IMR-90 (cell line): ENCODE measurements at regions of chr21 and their contacts with region 1.

Region 1: GRCh38 chr21:34333150-34333739 is 30.6 kb upstream of the KCNE2 start:
- DNase-seq: peak; percentile 25
- ATAC-seq: no peak
- H3K4me3 ChIP-seq: no peak overlapping the region
- H3K27ac ChIP-seq: no peak overlapping the region
- H3K4me1 ChIP-seq: peaks cover 34% of the 10 kb centered on the region
- H3K27me3 ChIP-seq: peaks cover 5% of the 10 kb centered on the region
- CTCF ChIP-seq: no peak
- POLR2A ChIP-seq: no peak
- RAD21 ChIP-seq: no peak

Region 2: GRCh38 chr21:34243562-34243961 is 89.7 kb before region 1 on chr21:
- CTCF ChIA-PET with region 1: no interaction called
- POLR2A ChIA-PET with region 1: interaction called, 12 read pairs
- dilution Hi-C with region 1: no loop called
- in situ Hi-C with region 1: no loop called
- intact Hi-C with region 1: no loop called
- DNase-seq: peak; percentile 11
- ATAC-seq: no peak
- H3K4me3 ChIP-seq: no peak overlapping the region
- H3K27ac ChIP-seq: no peak overlapping the region
- H3K4me1 ChIP-seq: no peaks in the 10 kb centered on the region
- H3K27me3 ChIP-seq: peaks cover 41% of the 10 kb centered on the region
- CTCF ChIP-seq: peak; percentile 47
- POLR2A ChIP-seq: no peak
- RAD21 ChIP-seq: peak; percentile 58